ENCODE measurements at regions of chr11 and their contacts with region 1.

Region 1: GRCh38 chr11:57567515-57568329 is at the start of gene UBE2L6:
- DNase-seq: peak; percentile 91
- H3K4me3 ChIP-seq: peak within 1 kb of the TSS; percentile 82 to 96
- H3K27ac ChIP-seq: peak within 1 kb of the TSS; percentile 58 to 83; a peak in 3 of 4 replicates
- H3K4me1 ChIP-seq: peaks cover 0 to 12% of the 10 kb centered on the region in 2 experiments; a peak in 1 of 4 replicates
- H3K27me3 ChIP-seq: no peaks in the 10 kb centered on the region
- CTCF ChIP-seq: no peak; the same call in 1 of the 2 replicates
- EP300 ChIP-seq: no peak
- RAD21 ChIP-seq: no peak
- polyA plus RNA-seq, gene UBE2L6: 65.9 and 77.0 TPM in 2 replicates

Region 2: DNA sequence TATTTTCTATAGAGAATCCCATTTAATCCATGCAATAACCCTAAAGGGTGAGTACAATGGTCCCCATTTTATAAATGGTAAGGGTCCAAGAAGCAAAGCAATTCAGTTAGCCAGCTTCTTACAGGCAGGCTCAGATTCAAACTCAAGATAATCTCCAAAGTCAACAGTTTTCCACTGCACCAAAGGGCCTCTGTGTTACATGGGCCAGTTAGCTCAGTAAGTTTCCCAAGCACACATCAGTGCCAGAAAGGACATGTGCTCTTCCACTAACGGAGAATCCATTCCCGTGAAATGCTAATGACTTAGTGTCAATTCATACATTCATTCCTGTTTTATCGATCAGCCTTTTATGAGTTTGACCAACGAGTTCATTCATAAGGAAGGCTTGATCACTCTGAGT is 63.2 kb before region 1 on chr11:
- CTCF ChIA-PET with region 1: no interaction called
- POLR2A ChIA-PET with region 1: no interaction called
- DNase-seq: no peak
- H3K4me3 ChIP-seq: no peak overlapping the region
- H3K27ac ChIP-seq: no peak overlapping the region
- H3K4me1 ChIP-seq: peaks cover 6 to 7% of the 10 kb centered on the region in 2 experiments; a peak in 2 of 4 replicates
- H3K27me3 ChIP-seq: no peaks in the 10 kb centered on the region
- CTCF ChIP-seq: no peak
- EP300 ChIP-seq: no peak
- RAD21 ChIP-seq: no peak

Region 3: DNA sequence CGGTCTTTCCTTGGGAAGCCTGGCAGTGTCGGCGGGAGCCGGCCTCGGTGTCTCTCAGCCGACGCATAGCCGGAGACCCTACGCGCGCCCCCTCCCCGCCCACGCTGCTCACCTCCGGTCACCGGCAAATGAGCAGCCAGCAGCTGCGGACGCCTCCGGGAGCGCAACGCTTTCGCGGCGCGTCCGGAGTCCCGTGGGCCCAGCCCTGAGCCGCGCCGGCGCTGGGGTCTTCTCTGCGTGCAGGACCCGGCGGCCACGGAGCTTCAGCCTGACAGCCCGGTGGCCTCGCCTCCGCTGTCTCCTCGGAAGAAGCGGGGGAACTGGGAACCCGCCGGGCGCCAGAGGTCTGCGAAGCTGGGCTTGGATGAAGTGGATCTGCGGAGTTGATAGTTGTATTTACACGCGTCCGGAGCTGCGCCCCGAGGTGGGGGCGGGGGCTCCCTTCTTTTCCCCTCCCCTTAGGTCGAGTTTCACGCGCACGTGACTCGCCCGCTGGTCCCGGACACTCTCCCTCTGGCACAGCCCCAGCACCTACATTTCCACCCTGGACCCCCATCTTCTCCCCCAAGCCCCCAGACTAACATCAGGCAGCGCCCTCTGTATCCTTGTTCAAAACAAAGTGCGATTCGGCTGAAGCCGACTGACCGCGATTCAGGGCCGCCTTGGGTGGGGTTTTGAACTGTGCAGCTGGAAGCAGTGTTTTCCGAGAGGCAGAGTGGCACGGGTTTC is 52.2 kb before region 1 on chr11 and contains the start of gene SLC43A1:
- CTCF ChIA-PET with region 1: interaction called, 14 read pairs
- POLR2A ChIA-PET with region 1: no interaction called
- DNase-seq: peak; percentile 74
- H3K4me3 ChIP-seq: peak within 1 kb of the TSS; percentile 69 to 78
- H3K27ac ChIP-seq: no peak within 1 kb of the TSS; a peak in 1 of 4 replicates
- H3K4me1 ChIP-seq: peaks cover 0 to 9% of the 10 kb centered on the region in 2 experiments; a peak in 1 of 4 replicates
- H3K27me3 ChIP-seq: no peaks in the 10 kb centered on the region
- CTCF ChIP-seq: no peak
- EP300 ChIP-seq: no peak
- RAD21 ChIP-seq: no peak
- polyA plus RNA-seq, gene SLC43A1: 3.7 and 4.4 TPM in 2 replicates

Region 4: GRCh38 chr11:57588046-57588710 is 20.5 kb after region 1 on chr11:
- CTCF ChIA-PET with region 1: interaction called, 15 read pairs
- POLR2A ChIA-PET with region 1: no interaction called
- DNase-seq: no peak
- H3K4me3 ChIP-seq: no peak overlapping the region
- H3K27ac ChIP-seq: no peak overlapping the region
- H3K4me1 ChIP-seq: no peaks in the 10 kb centered on the region
- H3K27me3 ChIP-seq: no peaks in the 10 kb centered on the region
- CTCF ChIP-seq: no peak
- EP300 ChIP-seq: no peak
- RAD21 ChIP-seq: no peak

Region 5: GRCh38 chr11:57614234-57614772 is 46.6 kb after region 1 on chr11:
- CTCF ChIA-PET with region 1: interaction called, 10 read pairs
- POLR2A ChIA-PET with region 1: no interaction called
- DNase-seq: no peak
- H3K4me3 ChIP-seq: no peak overlapping the region
- H3K27ac ChIP-seq: no peak overlapping the region
- H3K4me1 ChIP-seq: no peaks in the 10 kb centered on the region
- H3K27me3 ChIP-seq: peaks cover 29% of the 10 kb centered on the region
- CTCF ChIP-seq: no peak
- EP300 ChIP-seq: no peak
- RAD21 ChIP-seq: no peak

Region 6: GRCh38 chr11:57638005-57638781 is 70.5 kb after region 1 on chr11:
- CTCF ChIA-PET with region 1: interaction called, 326 read pairs
- POLR2A ChIA-PET with region 1: interaction called, 24 read pairs
- DNase-seq: peak; percentile 98
- H3K4me3 ChIP-seq: peak overlapping the region; percentile 86 to 99
- H3K27ac ChIP-seq: peak overlapping the region; percentile 77 to 81
- H3K4me1 ChIP-seq: peaks cover 14 to 18% of the 10 kb centered on the region in 2 experiments; a peak in 3 of 4 replicates
- H3K27me3 ChIP-seq: no peaks in the 10 kb centered on the region
- CTCF ChIP-seq: no peak
- EP300 ChIP-seq: no peak
- RAD21 ChIP-seq: no peak

Region 7: DNA sequence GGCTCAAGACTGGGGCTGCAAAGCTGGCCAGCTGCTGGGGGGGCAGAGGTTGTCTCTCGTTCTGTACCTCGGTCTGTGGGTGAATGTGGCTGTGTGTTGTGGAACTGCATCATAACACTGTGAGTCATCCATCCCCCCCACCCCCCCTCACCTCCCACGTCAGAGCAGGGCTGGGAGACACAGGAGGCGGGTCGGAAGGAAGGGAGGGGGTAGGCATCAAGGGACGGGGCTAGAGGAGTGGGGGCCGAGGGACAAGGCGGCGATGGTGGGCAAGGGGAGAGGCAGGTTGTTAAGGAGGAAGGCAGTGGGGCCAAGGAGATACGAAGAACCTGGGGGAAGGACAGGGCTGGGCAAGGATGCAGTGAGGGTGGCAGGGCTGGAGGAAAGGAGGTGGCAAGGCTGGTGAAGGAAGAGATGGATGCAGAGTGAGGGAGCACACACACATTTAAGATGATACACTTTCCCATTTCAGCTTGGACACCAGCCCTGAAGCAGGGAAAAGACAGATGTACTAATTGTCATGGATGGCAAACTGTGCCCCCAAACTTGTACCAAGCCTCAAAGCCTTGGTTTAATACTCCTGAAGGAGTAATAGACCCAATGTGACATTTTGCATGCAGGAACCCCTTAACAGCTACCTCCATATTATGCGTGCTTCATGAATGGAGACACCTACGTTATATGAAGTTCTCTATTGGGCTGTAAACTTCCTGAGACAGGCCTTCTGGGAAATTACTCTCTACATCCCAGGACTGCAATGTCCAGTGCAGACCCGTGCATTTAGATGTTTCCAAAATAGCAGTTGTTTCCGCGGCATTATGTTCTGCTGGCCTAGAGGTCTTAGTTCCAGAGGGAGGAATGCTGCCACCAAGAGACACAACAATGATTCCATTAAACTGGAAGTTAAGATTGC is 82.4 kb after region 1 on chr11 and contains the start of gene YPEL4:
- CTCF ChIA-PET with region 1: interaction called, 326 read pairs
- POLR2A ChIA-PET with region 1: interaction called, 8 read pairs
- DNase-seq: peak; percentile 88
- H3K4me3 ChIP-seq: peak within 1 kb of the TSS; percentile 68 to 69
- H3K27ac ChIP-seq: peak within 1 kb of the TSS; percentile 28 to 71; a peak in 2 of 4 replicates
- H3K4me1 ChIP-seq: peaks cover 16 to 35% of the 10 kb centered on the region in 2 experiments; a peak in 3 of 4 replicates
- H3K27me3 ChIP-seq: no peaks in the 10 kb centered on the region
- CTCF ChIP-seq: no peak
- EP300 ChIP-seq: no peak
- RAD21 ChIP-seq: no peak
- polyA plus RNA-seq, gene YPEL4: 2.3 and 2.4 TPM in 2 replicates

Region 8: DNA sequence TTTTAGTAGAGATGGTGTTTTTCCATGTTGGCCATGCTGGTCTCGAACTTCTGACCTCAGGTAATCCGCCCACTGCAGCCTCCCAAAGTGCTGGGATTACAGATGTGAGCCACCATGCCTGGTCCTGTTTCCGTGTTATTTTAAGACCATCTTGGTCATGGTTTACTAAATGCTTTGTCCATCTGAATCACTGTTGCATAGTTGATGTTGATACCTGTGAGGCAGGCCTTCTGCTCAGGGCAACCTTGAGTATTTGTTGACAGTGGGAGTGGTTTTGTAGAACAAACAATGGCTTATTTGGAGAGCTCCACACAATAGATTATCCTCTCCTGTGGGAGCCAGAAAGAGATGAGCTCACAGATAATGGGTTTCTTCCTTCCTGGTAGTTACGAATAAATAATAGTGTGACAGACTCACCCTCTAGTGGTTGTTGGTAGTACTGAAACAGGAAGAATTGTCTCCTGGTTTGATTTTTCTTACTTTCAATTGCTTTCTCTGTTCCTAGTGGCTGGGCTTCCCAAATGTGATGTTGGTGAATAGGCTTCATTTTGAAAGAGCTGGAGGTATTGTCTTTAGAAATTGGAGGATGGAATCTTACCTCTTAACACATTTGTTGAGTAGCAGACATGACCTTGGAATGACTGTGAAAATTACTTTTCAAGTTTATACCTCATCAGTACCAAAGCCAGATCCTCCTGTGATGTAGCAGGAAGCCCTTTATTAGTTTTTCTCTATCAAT is 232.9 kb after region 1 on chr11:
- CTCF ChIA-PET with region 1: interaction called, 14 read pairs
- POLR2A ChIA-PET with region 1: no interaction called
- DNase-seq: peak; percentile 77
- H3K4me3 ChIP-seq: no peak overlapping the region; a peak in 1 of 4 replicates
- H3K27ac ChIP-seq: peak overlapping the region; percentile 48 to 63; a peak in 3 of 4 replicates
- H3K4me1 ChIP-seq: peaks cover 17 to 26% of the 10 kb centered on the region in 2 experiments
- H3K27me3 ChIP-seq: no peaks in the 10 kb centered on the region
- CTCF ChIP-seq: peak; percentile 87
- EP300 ChIP-seq: no peak
- RAD21 ChIP-seq: peak; percentile 96

Measured in SK-N-SH (cell line).